ENCODE measurements at regions of chr14 and their contacts with region 1.

Region 1: DNA sequence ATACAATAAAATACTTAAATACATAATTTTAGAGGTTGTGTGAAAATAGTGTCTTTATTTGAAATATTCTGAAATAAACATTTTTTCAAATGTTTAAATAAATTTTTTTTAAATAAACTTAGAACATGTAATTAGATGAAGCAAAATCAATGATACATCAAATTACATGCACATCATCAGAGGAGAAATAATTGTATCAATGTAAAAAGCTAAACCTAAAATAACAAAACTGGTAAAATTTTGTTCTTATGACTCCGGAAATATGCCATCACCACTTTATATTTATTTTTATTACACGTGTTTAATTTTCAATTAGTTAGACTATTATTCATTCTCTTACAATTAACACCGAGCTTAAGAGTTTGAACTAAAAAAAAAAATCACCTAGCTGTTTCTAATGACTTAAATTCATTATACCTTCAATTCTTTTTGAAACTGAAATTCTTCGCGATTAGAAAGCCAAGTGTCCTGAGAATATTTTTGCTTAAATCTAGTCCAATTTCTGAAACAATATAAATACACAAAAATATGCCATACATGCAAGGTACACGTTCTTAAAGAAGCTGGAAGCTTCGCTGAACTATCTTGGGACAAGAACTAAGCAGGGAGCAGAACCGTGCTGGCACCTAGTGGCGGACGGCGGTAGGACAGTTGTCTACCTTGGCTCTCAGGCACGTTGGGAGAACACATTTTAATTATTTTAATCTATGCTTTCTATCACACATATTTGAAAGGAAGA is 230.5 kb downstream of the SLC25A21 start:
- DNase-seq: peak; percentile 49 to 88 (median 73)
- H3K4me3 ChIP-seq: no peak overlapping the region
- H3K27ac ChIP-seq: no peak overlapping the region
- H3K4me1 ChIP-seq: no peaks in the 10 kb centered on the region
- H3K27me3 ChIP-seq: no peaks in the 10 kb centered on the region
- CTCF ChIP-seq: peak; percentile 86 to 98 (median 90)
- POLR2A ChIP-seq: no peak

Region 2: GRCh38 chr14:36647824-36648753 is 293.9 kb before region 1 on chr14:
- intact Hi-C with region 1: loop called (anchors 5 to 10 kb)
- DNase-seq: peak in 2 of 7 donors; percentile 24 to 31
- H3K4me3 ChIP-seq: peak overlapping the region in 1 of 4 donors; percentile 27
- H3K27ac ChIP-seq: no peak overlapping the region
- H3K4me1 ChIP-seq: peaks cover 7 to 18% of the 10 kb centered on the region in 2 donors
- H3K27me3 ChIP-seq: peaks cover 77% of the 10 kb centered on the region
- CTCF ChIP-seq: peak; percentile 12 to 49 (median 43)
- POLR2A ChIP-seq: no peak

Region 3: DNA sequence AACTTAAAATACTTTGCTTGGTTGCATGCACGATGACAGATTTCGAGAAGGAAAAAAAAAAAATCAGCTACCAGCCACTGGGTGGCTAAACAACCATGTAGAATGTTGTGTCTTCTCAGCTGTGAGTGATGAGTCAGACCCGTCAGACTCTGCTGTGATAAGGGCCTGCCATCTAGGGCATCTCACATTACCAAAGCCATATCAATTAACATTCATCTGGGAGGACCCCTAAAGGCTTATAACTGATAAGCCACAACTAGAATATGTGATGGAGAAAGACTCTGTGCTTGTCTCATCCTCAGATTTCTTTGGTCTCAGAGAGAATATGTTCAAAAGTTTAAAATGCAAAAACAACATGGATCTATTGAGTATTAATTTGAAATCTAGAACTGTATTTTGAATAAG is 168.8 kb before region 1 on chr14:
- intact Hi-C with region 1: loop called in 1 of 2 experiments (anchors 10 kb)
- DNase-seq: peak in 3 of 7 donors; percentile 17 to 21 (median 19)
- H3K4me3 ChIP-seq: no peak overlapping the region
- H3K27ac ChIP-seq: no peak overlapping the region
- H3K4me1 ChIP-seq: no peaks in the 10 kb centered on the region
- H3K27me3 ChIP-seq: no peaks in the 10 kb centered on the region
- CTCF ChIP-seq: peak in 5 of 6 experiments; percentile 10 to 35 (median 24)
- POLR2A ChIP-seq: no peak

Region 4: GRCh38 chr14:37340355-37340754 is 398.4 kb after region 1 on chr14:
- intact Hi-C with region 1: no loop called
- DNase-seq: no peak
- H3K4me3 ChIP-seq: no peak overlapping the region
- H3K27ac ChIP-seq: no peak overlapping the region
- H3K4me1 ChIP-seq: no peaks in the 10 kb centered on the region
- H3K27me3 ChIP-seq: no peaks in the 10 kb centered on the region
- CTCF ChIP-seq: no peak
- POLR2A ChIP-seq: no peak

Measured in adrenal gland (tissue), 19 donors.